ENCODE measurements at regions of chr11 and their contacts with region 1.

Region 1: DNA sequence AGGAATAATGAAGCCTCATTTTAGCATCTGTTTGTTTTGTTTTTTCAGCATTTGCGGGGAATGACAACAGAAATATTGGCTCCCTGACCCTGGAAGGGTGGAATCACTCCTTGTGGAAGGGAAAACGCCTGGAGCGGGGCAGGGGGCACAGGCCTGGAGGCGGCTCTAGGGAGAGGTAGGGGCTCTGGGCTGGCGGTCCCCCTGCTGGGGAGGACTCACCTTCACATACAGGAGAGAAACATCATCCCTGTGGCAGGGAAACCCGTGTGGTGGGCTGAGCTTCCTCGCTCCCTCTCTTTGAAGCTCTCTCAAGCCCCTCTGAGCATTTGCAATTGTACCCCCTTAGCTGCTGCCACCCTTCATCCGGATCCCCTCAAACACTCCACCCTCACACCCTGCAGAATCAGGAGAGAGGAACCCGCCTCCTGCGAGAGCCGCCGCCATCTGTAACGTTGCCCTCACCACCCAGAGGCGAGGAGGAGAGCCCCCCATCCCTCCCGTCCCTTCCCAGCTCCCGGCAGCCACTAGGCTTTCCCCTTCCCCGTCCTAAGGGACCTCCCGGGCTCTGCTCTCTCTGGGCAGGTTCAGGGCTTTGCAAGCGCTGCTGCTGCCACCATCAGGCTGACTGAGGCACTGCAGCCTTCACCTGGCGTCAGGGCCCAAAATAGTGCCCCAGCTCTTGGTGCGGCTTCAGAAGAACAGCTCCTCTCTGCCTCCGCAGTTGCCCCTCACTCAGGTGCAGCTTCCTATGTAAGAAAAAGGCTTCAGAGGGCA is 10.4 kb downstream of the KIRREL3 start:
- DNase-seq: peak; percentile 88
- H3K4me3 ChIP-seq: peak overlapping the region; percentile 21 to 45; a peak in 3 of 4 replicates
- H3K27ac ChIP-seq: peak overlapping the region in 1 of 2 experiments; percentile 99; a peak in 2 of 4 replicates
- H3K4me1 ChIP-seq: peaks cover 2 to 33% of the 10 kb centered on the region in 2 experiments; a peak in 3 of 4 replicates
- H3K27me3 ChIP-seq: no peaks in the 10 kb centered on the region
- CTCF ChIP-seq: peak; percentile 97
- EP300 ChIP-seq: no peak
- RAD21 ChIP-seq: peak; percentile 93

Region 2: DNA sequence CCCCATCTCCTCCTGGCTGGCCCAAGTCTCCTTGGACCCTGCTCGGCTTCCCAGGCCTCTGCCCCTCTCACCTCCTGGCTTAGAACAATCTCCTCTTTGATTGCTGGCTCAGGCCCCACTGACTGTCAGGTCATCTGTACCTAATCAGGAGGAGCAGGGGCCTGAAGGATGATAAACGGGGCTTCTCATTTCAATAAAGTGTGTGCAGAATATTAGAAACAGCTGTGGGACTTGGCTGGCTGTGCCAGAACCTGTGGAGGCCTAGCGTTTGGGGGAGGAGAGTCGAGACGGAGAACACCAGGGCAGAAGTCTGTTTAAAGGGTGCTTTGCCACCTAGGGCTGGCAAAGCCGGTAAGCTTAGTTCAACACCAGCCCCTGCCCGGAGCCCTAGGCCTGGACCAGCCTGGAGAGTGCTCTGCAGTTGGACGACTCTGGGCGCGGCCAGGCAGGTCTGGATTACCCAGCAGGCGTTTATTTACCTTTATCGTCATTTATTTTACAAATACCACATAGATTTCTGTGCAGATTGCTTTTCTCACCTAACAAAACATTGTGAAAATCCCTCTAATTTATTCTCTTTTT is 1054.4 kb before region 1 on chr11:
- CTCF ChIA-PET with region 1: no interaction called
- POLR2A ChIA-PET with region 1: no interaction called
- DNase-seq: peak; percentile 88
- H3K4me3 ChIP-seq: peak overlapping the region in 1 of 2 experiments; percentile 9; a peak in 1 of 4 replicates
- H3K27ac ChIP-seq: peak overlapping the region in 1 of 2 experiments; percentile 77; a peak in 2 of 4 replicates
- H3K4me1 ChIP-seq: peaks cover 0 to 24% of the 10 kb centered on the region in 2 experiments; a peak in 2 of 4 replicates
- H3K27me3 ChIP-seq: no peaks in the 10 kb centered on the region
- CTCF ChIP-seq: no peak
- EP300 ChIP-seq: peak; percentile 63 to 94; a peak in 3 of 4 replicates
- RAD21 ChIP-seq: peak; percentile 31

Region 3: GRCh38 chr11:126440792-126441514 is 549.2 kb before region 1 on chr11:
- CTCF ChIA-PET with region 1: interaction called, 79 read pairs
- POLR2A ChIA-PET with region 1: no interaction called
- DNase-seq: peak; percentile 94
- H3K4me3 ChIP-seq: no peak overlapping the region; a peak in 1 of 4 replicates
- H3K27ac ChIP-seq: no peak overlapping the region
- H3K4me1 ChIP-seq: peaks cover 0 to 20% of the 10 kb centered on the region in 2 experiments; a peak in 1 of 4 replicates
- H3K27me3 ChIP-seq: no peaks in the 10 kb centered on the region
- CTCF ChIP-seq: peak; percentile 95
- EP300 ChIP-seq: no peak
- RAD21 ChIP-seq: peak; percentile 96

Region 4: GRCh38 chr11:126607374-126607773 is 382.8 kb before region 1 on chr11:
- CTCF ChIA-PET with region 1: interaction called, 108 read pairs
- POLR2A ChIA-PET with region 1: no interaction called
- DNase-seq: peak; percentile 83
- H3K4me3 ChIP-seq: no peak overlapping the region
- H3K27ac ChIP-seq: no peak overlapping the region
- H3K4me1 ChIP-seq: peaks cover 0 to 30% of the 10 kb centered on the region in 2 experiments; a peak in 2 of 4 replicates
- H3K27me3 ChIP-seq: no peaks in the 10 kb centered on the region
- CTCF ChIP-seq: peak; percentile 83
- EP300 ChIP-seq: no peak
- RAD21 ChIP-seq: peak; percentile 91

Region 5: GRCh38 chr11:126716456-126717083 is 273.6 kb before region 1 on chr11:
- CTCF ChIA-PET with region 1: interaction called, 233 read pairs
- POLR2A ChIA-PET with region 1: interaction called, 3 read pairs
- DNase-seq: peak; percentile 75
- H3K4me3 ChIP-seq: no peak overlapping the region; a peak in 1 of 4 replicates
- H3K27ac ChIP-seq: no peak overlapping the region
- H3K4me1 ChIP-seq: no peaks in the 10 kb centered on the region; a peak in 1 of 4 replicates
- H3K27me3 ChIP-seq: no peaks in the 10 kb centered on the region
- CTCF ChIP-seq: peak; percentile 75
- EP300 ChIP-seq: no peak
- RAD21 ChIP-seq: peak; percentile 85

Region 6: DNA sequence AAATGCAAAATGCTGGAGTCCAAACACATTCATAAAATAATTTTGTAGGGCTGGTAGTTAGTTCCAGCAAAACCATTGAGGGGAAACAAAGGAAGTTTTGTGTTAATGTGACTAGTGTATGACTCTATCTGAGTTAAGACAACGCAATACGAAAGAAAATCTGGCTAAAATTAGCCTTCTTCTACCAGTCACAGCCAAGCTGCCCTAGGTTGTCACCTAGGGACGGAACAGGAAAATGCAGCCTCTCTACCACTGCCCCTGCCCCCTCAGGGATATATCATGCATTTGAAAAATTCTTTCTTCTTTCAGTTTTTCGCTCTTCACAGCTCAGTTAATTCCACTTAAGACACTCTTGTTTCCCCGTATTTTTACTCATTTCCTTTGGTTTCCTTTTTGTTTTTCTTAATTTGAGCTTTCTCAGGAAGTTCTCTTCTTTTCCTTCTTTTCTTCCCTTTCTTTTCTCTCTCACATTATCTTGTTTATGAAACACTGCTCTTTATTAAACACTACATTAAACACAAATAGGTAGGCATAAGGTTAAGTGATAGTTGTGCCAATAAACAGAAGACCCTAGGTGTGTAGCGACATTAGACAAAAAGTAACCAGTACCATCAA is 20.2 kb before region 1 on chr11:
- CTCF ChIA-PET with region 1: interaction called, 15 read pairs
- POLR2A ChIA-PET with region 1: no interaction called
- DNase-seq: peak; percentile 40
- H3K4me3 ChIP-seq: no peak overlapping the region; a peak in 1 of 4 replicates
- H3K27ac ChIP-seq: peak overlapping the region in 1 of 2 experiments; percentile 59; a peak in 2 of 4 replicates
- H3K4me1 ChIP-seq: no peaks in the 10 kb centered on the region
- H3K27me3 ChIP-seq: no peaks in the 10 kb centered on the region
- CTCF ChIP-seq: peak; percentile 83
- EP300 ChIP-seq: no peak
- RAD21 ChIP-seq: peak; percentile 71

Region 7: GRCh38 chr11:127003260-127003981 is 13.3 kb after region 1 on chr11:
- CTCF ChIA-PET with region 1: interaction called, 53 read pairs
- POLR2A ChIA-PET with region 1: no interaction called
- DNase-seq: peak; percentile 91
- H3K4me3 ChIP-seq: peak overlapping the region; percentile 47 to 65
- H3K27ac ChIP-seq: no peak overlapping the region
- H3K4me1 ChIP-seq: peaks cover 0 to 13% of the 10 kb centered on the region in 2 experiments; a peak in 2 of 4 replicates
- H3K27me3 ChIP-seq: no peaks in the 10 kb centered on the region
- CTCF ChIP-seq: peak; percentile 67
- EP300 ChIP-seq: no peak
- RAD21 ChIP-seq: peak; percentile 62

Measured in SK-N-SH (cell line).